IMR-90 (cell line): ENCODE measurements at regions of chr4 and their contacts with region 1.

Region 1: DNA sequence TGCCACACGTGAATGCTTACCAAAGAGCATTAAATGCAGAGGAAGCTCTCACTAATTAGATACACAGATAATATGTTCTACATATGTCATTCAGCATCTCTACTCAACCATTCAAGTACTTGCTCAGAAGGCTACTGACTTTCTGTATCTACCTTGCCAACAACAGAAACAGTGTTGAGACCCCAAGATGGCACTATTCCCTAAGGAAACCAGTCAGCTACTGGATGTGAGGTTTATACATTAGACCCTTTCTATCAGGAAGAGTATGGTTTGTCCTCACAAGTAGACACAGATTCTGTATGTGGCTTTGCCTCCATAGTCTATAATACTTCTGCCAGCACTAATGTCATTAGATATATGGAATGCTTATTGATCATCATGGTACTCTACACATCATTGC is 443.9 kb upstream of the INTU start:
- DNase-seq: peak; percentile 25
- ATAC-seq: no peak
- H3K4me3 ChIP-seq: no peak overlapping the region
- H3K27ac ChIP-seq: no peak overlapping the region
- H3K4me1 ChIP-seq: no peaks in the 10 kb centered on the region
- H3K27me3 ChIP-seq: no peaks in the 10 kb centered on the region
- CTCF ChIP-seq: 0 out of 2 replicates have a peak, but pooled peaks have one; percentile 23
- POLR2A ChIP-seq: no peak
- RAD21 ChIP-seq: peak; percentile 44

Region 2: GRCh38 chr4:127124920-127125319 is 63.9 kb before region 1 on chr4:
- CTCF ChIA-PET with region 1: no interaction called
- POLR2A ChIA-PET with region 1: no interaction called
- dilution Hi-C with region 1: no loop called
- in situ Hi-C with region 1: no loop called
- intact Hi-C with region 1: no loop called
- DNase-seq: peak; percentile 24
- ATAC-seq: no peak
- H3K4me3 ChIP-seq: no peak overlapping the region
- H3K27ac ChIP-seq: no peak overlapping the region
- H3K4me1 ChIP-seq: peaks cover 4% of the 10 kb centered on the region
- H3K27me3 ChIP-seq: no peaks in the 10 kb centered on the region
- CTCF ChIP-seq: peak; percentile 48
- POLR2A ChIP-seq: no peak
- RAD21 ChIP-seq: peak; percentile 51

Region 3: GRCh38 chr4:127604949-127605709 is 416.3 kb after region 1 on chr4:
- CTCF ChIA-PET with region 1: no interaction called
- POLR2A ChIA-PET with region 1: no interaction called
- dilution Hi-C with region 1: no loop called
- in situ Hi-C with region 1: no loop called
- intact Hi-C with region 1: loop called (anchors 5 kb)
- DNase-seq: peak; percentile 48
- ATAC-seq: no peak
- H3K4me3 ChIP-seq: no peak overlapping the region
- H3K27ac ChIP-seq: no peak overlapping the region
- H3K4me1 ChIP-seq: no peaks in the 10 kb centered on the region
- H3K27me3 ChIP-seq: peaks cover 10% of the 10 kb centered on the region
- CTCF ChIP-seq: peak; percentile 72
- POLR2A ChIP-seq: no peak
- RAD21 ChIP-seq: peak; percentile 64